Activated CD4-positive, alpha-beta T cell treated with anti-CD3 and anti-CD28 coated beads for 36 hours (primary cell): ENCODE measurements at regions of chr19 and their contacts with region 1.

Region 1: DNA sequence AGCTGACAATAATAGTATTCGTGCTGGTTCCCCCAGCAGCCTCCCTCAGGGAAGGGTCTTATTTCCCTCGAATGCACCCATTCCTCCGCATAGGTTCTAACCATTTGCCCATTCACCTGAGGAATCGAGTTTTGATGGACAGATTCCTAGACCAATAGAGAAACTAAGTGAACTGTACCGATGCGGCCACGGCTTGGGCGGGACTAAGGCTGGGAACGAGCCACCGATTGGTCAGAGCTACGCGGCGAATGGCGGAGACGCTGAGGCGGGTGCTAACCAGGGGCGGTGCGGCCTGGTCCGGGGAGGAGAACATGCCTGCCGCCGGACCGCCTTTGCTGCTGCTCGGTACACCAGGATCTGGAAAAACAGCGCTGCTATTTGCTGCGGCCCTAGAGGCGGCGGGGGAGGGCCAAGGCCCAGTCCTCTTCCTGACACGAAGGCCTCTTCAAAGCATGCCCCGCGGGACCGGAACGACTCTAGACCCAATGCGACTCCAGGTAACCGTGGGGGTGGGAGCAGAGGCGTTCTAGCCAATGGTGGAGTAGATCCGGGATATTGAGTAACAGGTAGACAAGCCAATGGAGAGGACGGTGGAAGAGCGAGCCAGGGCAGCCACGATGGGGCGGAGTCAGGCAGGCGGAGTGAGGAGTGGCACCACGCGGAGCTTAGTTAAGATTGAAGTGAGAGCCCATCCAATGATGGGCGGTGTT is at the start of gene SWSAP1:
- DNase-seq: peak; percentile 98
- ATAC-seq: peak; percentile 92
- H3K4me3 Mint-ChIP-seq: no peak within 1 kb of the TSS
- H3K27ac Mint-ChIP-seq: no peak within 1 kb of the TSS
- H3K4me1 Mint-ChIP-seq: peaks cover 28% of the 10 kb centered on the region
- H3K27me3 Mint-ChIP-seq: no peaks in the 10 kb centered on the region
- total RNA-seq, gene SWSAP1: 1.5 to 1.7 TPM

Region 2: DNA sequence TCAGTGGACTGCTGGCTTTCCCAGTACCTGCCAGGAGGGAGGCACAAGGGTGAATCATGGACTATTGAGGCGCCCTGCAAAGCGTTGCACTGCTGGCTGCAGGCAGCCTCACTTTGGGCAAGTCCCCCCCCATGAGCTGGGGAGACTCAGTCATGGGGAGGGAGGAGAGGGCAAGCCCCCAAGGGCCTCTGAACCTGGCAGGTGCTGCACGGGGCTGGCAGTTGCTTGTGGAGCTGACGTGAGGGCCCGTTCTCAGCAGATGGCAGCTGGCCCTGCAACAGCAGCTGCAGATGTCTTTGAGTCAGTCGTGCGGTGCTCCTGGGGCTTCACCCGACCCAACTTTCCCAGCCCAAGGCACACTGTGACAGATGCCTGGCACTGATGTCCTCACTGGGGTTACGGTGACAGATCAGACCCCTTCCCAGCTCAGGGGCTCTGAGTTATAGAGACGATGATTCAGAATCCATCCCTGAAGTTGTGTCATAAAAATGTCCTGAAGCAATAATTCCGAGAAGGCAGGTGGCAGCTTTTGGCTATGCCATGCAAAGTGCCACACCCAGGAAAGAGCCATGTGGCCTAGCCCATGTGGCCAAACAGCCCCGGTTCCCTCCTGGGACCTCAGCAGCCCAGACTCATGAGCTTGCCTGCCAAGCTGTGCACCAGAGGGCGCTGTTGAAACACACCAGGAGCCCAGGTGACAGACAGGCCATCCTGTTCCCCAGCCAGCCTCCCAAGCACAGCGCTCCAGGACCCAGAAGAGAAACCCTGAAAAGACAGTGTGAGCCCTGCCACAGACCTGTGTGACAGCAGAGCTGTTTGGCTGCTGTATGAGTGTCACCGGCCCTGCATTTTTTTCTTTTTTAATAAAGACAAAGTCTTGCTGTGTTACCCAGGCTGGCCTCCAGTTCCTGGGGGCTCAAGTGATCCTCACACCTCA is 338.9 kb before region 1 on chr19:
- CTCF ChIA-PET with region 1: no interaction called
- POLR2A ChIA-PET with region 1: no interaction called
- intact Hi-C with region 1: no loop called
- DNase-seq: peak; percentile 94
- ATAC-seq: peak; percentile 99
- H3K4me3 Mint-ChIP-seq: no peak overlapping the region
- H3K27ac Mint-ChIP-seq: peak overlapping the region; percentile 9
- H3K4me1 Mint-ChIP-seq: peaks cover 6% of the 10 kb centered on the region
- H3K27me3 Mint-ChIP-seq: no peaks in the 10 kb centered on the region

Region 3: GRCh38 chr19:11339254-11340098 is 35.1 kb before region 1 on chr19 and contains the start of gene RAB3D:
- CTCF ChIA-PET with region 1: interaction called, 4 read pairs
- POLR2A ChIA-PET with region 1: interaction called, 3 read pairs
- intact Hi-C with region 1: loop called in 1 of 2 experiments (anchors 1 kb)
- DNase-seq: peak; percentile 93
- ATAC-seq: peak; percentile 99
- H3K4me3 Mint-ChIP-seq: peak within 1 kb of the TSS; percentile 72
- H3K27ac Mint-ChIP-seq: no peak within 1 kb of the TSS
- H3K4me1 Mint-ChIP-seq: peaks cover 23% of the 10 kb centered on the region
- H3K27me3 Mint-ChIP-seq: no peaks in the 10 kb centered on the region
- total RNA-seq, gene RAB3D: 7.5 to 8.9 TPM

Region 4: GRCh38 chr19:11346092-11346940 is 28.3 kb before region 1 on chr19 and contains the starts of genes CCDC159 and TMEM205:
- CTCF ChIA-PET with region 1: interaction called, 10 read pairs
- POLR2A ChIA-PET with region 1: interaction called, 4 read pairs
- intact Hi-C with region 1: loop called (anchors 1 kb)
- DNase-seq: peak; percentile 99
- ATAC-seq: peak; percentile 99
- H3K4me3 Mint-ChIP-seq: peak within 1 kb of the TSS; percentile 83
- H3K27ac Mint-ChIP-seq: peak within 1 kb of the TSS; percentile 82
- H3K4me1 Mint-ChIP-seq: peaks cover 23% of the 10 kb centered on the region
- H3K27me3 Mint-ChIP-seq: no peaks in the 10 kb centered on the region
- total RNA-seq, gene CCDC159: 15.3 to 18.0 TPM
- total RNA-seq, gene TMEM205: 28.0 to 32.6 TPM

Region 5: DNA sequence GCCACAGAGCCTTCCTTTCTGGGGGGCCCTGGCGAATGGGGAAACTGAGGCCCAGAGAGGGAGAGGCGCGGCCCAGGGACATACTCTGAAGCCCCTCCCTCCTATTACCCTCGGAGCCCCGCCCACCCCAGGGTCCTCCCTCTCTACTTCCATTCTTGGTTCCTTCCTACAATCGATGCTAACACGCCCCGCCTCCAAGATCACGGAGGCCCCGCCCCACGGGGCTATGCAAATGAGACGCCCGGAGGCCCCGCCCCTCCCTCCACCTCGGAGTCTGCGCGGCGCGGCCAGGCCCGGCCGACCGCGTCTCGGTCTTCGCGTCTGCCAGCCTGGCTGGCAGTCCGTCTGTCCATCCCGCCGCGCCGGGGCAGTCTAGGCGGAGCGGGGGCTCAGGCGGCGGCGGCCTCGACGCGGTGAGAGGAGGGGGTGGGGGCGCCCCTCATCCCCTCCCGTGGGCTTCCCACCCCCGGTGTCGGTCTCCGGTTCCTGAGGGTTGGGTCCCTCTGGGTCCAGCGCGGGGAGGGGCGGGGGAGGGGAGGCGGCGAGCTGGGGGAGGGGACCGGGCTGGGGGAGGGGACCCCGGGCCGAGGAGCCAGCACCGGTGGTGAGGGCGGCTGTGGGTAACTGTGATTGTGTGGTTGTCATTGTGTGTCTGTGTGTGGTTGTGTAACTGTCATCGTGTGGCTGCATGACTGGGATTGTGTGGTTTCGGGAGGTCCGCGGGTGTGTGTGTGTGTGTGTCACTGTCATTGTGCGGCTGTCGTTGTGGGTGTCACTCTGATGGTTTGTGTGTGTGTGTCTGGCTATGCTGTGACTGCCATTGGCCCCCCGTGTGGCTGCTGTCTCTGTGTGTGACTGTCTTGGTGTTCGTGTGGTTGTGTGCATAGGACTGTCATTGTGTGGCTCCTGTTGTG is 19.2 kb before region 1 on chr19 and contains the start of gene PLPPR2:
- CTCF ChIA-PET with region 1: no interaction called
- POLR2A ChIA-PET with region 1: interaction called, 3 read pairs
- intact Hi-C with region 1: loop called in 1 of 2 experiments (anchors 1 kb)
- DNase-seq: peak; percentile 92
- ATAC-seq: peak; percentile 95
- H3K4me3 Mint-ChIP-seq: peak within 1 kb of the TSS; percentile 43
- H3K27ac Mint-ChIP-seq: peak within 1 kb of the TSS; percentile 23
- H3K4me1 Mint-ChIP-seq: peaks cover 7% of the 10 kb centered on the region
- H3K27me3 Mint-ChIP-seq: peaks cover 13% of the 10 kb centered on the region
- total RNA-seq, gene PLPPR2: 2.1 to 2.2 TPM